ENCODE measurements at regions of chr6 and their contacts with region 1.

Region 1: DNA sequence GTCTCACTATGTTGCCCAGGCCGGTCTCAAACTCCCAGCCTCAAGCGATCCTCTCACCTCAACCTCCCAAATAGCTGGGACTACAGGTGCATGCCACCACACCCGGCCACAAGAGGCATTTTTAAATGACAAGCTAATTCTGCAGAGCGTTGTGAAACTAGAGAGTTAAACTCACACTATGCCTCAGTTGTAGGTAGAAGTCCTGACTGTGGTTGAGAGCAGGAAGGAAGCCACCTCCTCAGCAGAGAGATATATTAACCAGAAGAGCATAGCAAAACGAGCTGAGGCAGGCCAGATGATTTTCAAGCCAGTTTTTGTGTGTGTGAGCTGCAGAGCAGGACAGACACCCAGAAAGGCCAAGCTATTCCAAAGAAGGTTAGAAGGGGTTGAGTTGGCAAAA is 150.3 kb downstream of the MBOAT1 start:
- DNase-seq: no peak
- H3K4me3 ChIP-seq: no peak overlapping the region
- H3K27ac ChIP-seq: no peak overlapping the region
- H3K4me1 ChIP-seq: no peaks in the 10 kb centered on the region
- H3K27me3 ChIP-seq: no peaks in the 10 kb centered on the region
- CTCF ChIP-seq: no peak
- POLR2A ChIP-seq: no peak

Region 2: DNA sequence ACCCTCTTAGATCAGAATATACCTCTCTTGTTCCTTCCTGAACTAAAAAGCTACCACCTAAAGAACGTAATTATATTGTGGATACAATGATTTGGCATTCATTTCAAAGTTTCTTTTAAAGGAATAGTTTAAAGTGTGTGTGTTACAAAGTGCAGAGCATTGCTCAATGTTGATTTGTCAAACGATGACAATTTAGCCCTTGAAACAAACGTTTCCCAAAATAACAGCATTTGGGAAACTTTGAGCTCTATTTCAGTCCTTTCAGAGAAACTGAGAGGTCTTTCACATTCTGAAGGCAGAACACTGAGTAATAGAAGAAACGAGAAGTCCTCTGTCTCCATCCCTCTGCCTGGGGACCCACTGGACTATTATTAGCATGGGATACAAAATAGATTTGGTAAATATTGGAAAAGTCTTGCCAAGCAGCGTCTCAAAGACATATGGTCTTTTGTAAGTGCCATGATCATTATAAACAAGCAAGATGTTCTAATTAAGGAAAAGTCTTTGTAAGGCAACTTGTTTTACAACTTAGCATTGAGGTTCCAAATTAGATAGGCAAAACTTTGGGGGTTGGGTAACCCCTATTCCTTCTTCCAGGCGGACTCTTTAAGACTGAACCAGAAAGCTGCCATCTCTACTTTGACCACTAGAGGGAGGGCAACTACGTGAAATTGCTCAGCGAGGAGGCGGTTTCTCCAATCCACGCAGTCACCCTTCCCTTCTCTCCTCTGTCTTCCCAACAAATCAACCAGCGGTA is 1466.0 kb before region 1 on chr6:
- intact Hi-C with region 1: loop called (anchors 10 kb)
- DNase-seq: peak; percentile 88
- H3K4me3 ChIP-seq: no peak overlapping the region
- H3K27ac ChIP-seq: no peak overlapping the region
- H3K4me1 ChIP-seq: no peaks in the 10 kb centered on the region
- H3K27me3 ChIP-seq: no peaks in the 10 kb centered on the region
- CTCF ChIP-seq: peak; percentile 80 to 93 (median 90)
- POLR2A ChIP-seq: no peak

Region 3: DNA sequence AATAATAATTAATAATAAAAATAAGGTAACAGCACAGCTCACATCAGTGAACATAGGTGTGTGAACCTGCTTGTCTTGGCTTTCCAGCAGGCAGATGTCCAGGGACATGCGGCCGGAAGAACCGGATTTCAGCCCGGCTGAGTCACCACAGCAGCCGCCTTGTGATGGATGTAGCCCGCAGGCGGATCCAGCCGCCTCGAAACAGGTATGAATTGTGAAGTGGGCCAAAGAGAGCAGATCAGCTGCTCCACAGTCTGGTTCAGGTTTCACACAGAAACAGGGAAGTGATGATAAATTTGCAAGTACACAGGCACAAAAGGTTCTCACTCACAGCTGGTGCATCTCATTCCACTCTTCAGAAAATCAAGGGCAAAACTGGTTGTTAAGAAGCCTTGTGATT is 169.7 kb before region 1 on chr6:
- intact Hi-C with region 1: no loop called
- DNase-seq: peak; percentile 21
- H3K4me3 ChIP-seq: peak overlapping the region in 1 of 2 donors; percentile 18
- H3K27ac ChIP-seq: no peak overlapping the region
- H3K4me1 ChIP-seq: peaks cover 2% of the 10 kb centered on the region
- H3K27me3 ChIP-seq: no peaks in the 10 kb centered on the region
- CTCF ChIP-seq: no peak
- POLR2A ChIP-seq: no peak